ENCODE measurements at regions of chr2 and their contacts with region 1.

Region 1: DNA sequence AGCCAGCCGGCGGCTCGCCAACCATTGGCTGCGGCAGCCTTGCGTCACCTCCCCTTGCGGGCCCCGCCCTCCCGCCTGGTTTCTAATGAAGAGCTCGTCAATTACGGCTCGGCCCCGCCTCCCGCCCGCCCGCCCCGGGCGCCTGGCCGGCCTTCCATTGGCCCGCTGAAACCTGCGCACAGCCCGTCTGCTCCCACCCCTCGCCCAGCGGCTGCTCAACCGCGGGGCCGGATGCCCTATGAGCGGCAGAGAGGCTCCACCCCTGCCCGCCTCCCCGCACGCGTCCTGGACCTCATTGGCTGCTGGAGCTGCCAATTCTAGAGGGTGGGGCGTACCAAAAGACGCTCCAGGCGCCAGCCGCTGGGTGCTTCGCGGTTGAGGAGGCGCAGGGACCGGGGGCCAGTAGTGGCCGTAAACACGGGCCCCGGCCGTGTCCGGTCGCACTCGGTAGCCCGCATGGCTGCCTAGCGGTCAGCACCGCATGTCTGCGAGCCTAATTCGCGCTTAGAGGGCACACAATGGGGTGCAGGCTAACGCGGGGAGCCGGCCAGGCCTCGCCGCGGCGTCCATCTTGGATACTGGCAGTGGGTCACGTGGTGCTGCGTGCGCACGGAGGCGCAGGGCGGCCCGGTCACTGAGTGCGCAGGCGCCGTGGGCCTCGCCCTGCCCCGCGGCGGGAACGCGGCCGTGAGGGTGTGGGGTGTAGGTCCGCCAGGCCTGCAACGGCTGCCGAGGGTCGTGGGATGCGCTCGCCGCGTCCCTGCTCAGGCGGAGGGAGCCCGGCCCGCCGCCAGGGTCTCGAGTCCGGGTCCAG is 454 bp upstream of the HDAC4 start:
- DNase-seq: peak; percentile 98 to 99
- ATAC-seq: peak; percentile 78 to 80
- H3K4me3 ChIP-seq: peak overlapping the region; percentile 61 to 96 (median 78)
- H3K27ac ChIP-seq: peak overlapping the region; percentile 93 to 100 (median 97)
- H3K4me1 ChIP-seq: peaks cover 13 to 39% of the 10 kb centered on the region in 2 donors
- H3K27me3 ChIP-seq: no peaks in the 10 kb centered on the region
- CTCF ChIP-seq: peak in 1 of 5 experiments; percentile 36
- POLR2A ChIP-seq: peak; percentile 98 to 99

Region 2: GRCh38 chr2:239087046-239087710 is 314.1 kb before region 1 on chr2:
- in situ Hi-C with region 1: no loop called
- intact Hi-C with region 1: no loop called
- DNase-seq: no peak
- ATAC-seq: no peak
- H3K4me3 ChIP-seq: no peak overlapping the region
- H3K27ac ChIP-seq: no peak overlapping the region
- H3K4me1 ChIP-seq: no peaks in the 10 kb centered on the region
- H3K27me3 ChIP-seq: no peaks in the 10 kb centered on the region
- CTCF ChIP-seq: no peak
- POLR2A ChIP-seq: no peak

Region 3: GRCh38 chr2:239143858-239144718 is 257.2 kb before region 1 on chr2:
- in situ Hi-C with region 1: no loop called
- intact Hi-C with region 1: loop called (anchors 5 kb)
- DNase-seq: peak in 1 of 2 donors; percentile 49
- ATAC-seq: peak; percentile 46 to 68
- H3K4me3 ChIP-seq: no peak overlapping the region
- H3K27ac ChIP-seq: peak overlapping the region; percentile 17 to 93 (median 58)
- H3K4me1 ChIP-seq: no peaks in the 10 kb centered on the region
- H3K27me3 ChIP-seq: no peaks in the 10 kb centered on the region
- CTCF ChIP-seq: peak; percentile 44 to 81 (median 68)
- POLR2A ChIP-seq: no peak

Region 4: GRCh38 chr2:239267288-239267951 is 133.9 kb before region 1 on chr2:
- in situ Hi-C with region 1: no loop called
- intact Hi-C with region 1: loop called (anchors 5 kb)
- DNase-seq: peak in 1 of 2 donors; percentile 73
- ATAC-seq: peak; percentile 14 to 49
- H3K4me3 ChIP-seq: peak overlapping the region in 3 of 4 donors; percentile 11 to 22 (median 19)
- H3K27ac ChIP-seq: peak overlapping the region; percentile 94 to 99 (median 98)
- H3K4me1 ChIP-seq: peaks cover 89 to 99% of the 10 kb centered on the region in 2 donors
- H3K27me3 ChIP-seq: no peaks in the 10 kb centered on the region
- CTCF ChIP-seq: peak in 3 of 5 experiments; percentile 16 to 50 (median 42)
- POLR2A ChIP-seq: peak; percentile 16 to 39

Region 5: GRCh38 chr2:239308661-239309397 is 92.4 kb before region 1 on chr2:
- in situ Hi-C with region 1: no loop called
- intact Hi-C with region 1: loop called (anchors 5 kb)
- DNase-seq: peak; percentile 73 to 83
- ATAC-seq: peak; percentile 13 to 42
- H3K4me3 ChIP-seq: peak overlapping the region; percentile 63 to 71 (median 69)
- H3K27ac ChIP-seq: peak overlapping the region; percentile 94 to 99 (median 98)
- H3K4me1 ChIP-seq: peaks cover 71 to 72% of the 10 kb centered on the region in 2 donors
- H3K27me3 ChIP-seq: no peaks in the 10 kb centered on the region
- CTCF ChIP-seq: peak in 2 of 5 experiments; percentile 10 to 29
- POLR2A ChIP-seq: peak; percentile 78 to 94

Region 6: GRCh38 chr2:239380831-239381708 is 20.2 kb before region 1 on chr2:
- in situ Hi-C with region 1: no loop called
- intact Hi-C with region 1: no loop called
- DNase-seq: no peak
- ATAC-seq: no peak
- H3K4me3 ChIP-seq: no peak overlapping the region
- H3K27ac ChIP-seq: no peak overlapping the region
- H3K4me1 ChIP-seq: no peaks in the 10 kb centered on the region
- H3K27me3 ChIP-seq: no peaks in the 10 kb centered on the region
- CTCF ChIP-seq: no peak
- POLR2A ChIP-seq: no peak

Region 7: DNA sequence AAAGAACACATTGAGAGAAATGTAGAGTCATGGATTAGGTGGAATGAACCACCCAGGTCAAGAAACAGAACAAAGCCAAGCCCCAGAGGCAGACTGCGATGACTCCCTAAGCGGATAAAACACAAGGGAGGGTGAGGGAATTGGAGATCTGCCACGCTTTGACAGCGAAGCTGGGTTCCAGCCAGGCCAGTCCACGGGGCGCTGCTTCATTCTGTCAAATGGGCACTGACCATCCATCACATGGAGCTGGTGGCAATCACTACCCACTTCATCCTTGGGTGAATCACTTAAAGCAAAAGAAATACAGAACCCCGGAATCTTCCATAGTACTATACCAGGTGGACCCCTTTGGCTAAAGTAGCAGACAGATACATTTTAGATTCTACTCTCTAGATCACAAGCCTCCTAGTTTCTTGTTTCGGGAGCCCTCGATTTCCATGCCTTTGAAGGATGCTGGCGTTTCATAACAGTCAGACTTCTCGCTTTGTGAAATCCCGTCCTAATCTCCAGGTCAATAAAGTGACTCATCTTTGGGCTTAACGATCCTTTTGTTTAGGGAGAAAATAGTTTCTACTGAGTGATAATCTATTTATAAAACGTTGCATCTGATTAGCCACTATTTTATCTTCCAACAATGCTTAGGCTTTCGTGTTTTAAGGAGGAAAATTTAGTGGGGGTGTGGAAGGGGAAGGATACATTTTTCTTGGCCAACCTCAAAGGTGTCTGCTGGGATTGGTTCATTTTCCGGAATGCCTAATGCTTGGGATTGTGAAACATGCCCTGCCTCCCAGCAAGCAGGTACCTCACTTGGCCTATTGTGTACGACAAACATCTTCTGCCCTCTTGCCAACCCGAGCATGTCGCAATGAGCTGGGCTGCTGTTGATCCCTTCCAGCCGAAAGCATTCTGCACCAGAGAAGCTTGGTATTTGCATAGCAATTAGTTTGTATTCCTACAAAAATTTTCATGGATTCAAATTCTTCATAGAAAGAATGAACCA is 43.7 kb after region 1 on chr2:
- in situ Hi-C with region 1: no loop called
- intact Hi-C with region 1: loop called (anchors 2 kb)
- DNase-seq: peak in 1 of 2 donors; percentile 57
- ATAC-seq: peak; percentile 74 to 78
- H3K4me3 ChIP-seq: no peak overlapping the region
- H3K27ac ChIP-seq: peak overlapping the region in 1 of 4 donors; percentile 52
- H3K4me1 ChIP-seq: peaks cover 7 to 13% of the 10 kb centered on the region in 2 donors
- H3K27me3 ChIP-seq: peaks cover 4 to 7% (median 7%) of the 10 kb centered on the region in 3 donors
- CTCF ChIP-seq: no peak
- POLR2A ChIP-seq: no peak

Region 8: GRCh38 chr2:239544143-239544917 is 143.1 kb after region 1 on chr2:
- in situ Hi-C with region 1: no loop called
- intact Hi-C with region 1: loop called (anchors 1 kb)
- DNase-seq: peak in 1 of 2 donors; percentile 4
- ATAC-seq: no peak
- H3K4me3 ChIP-seq: no peak overlapping the region
- H3K27ac ChIP-seq: no peak overlapping the region
- H3K4me1 ChIP-seq: peaks cover 7 to 10% of the 10 kb centered on the region in 2 donors
- H3K27me3 ChIP-seq: no peaks in the 10 kb centered on the region
- CTCF ChIP-seq: no peak
- POLR2A ChIP-seq: no peak

Region 9: GRCh38 chr2:239882331-239882732 is 481.1 kb after region 1 on chr2:
- in situ Hi-C with region 1: loop called in 1 of 4 experiments (anchors 25 kb)
- intact Hi-C with region 1: no loop called
- DNase-seq: peak in 1 of 2 donors; percentile 33
- ATAC-seq: peak; percentile 58 to 79
- H3K4me3 ChIP-seq: no peak overlapping the region
- H3K27ac ChIP-seq: no peak overlapping the region
- H3K4me1 ChIP-seq: peaks cover 0 to 6% of the 10 kb centered on the region in 2 donors
- H3K27me3 ChIP-seq: no peaks in the 10 kb centered on the region
- CTCF ChIP-seq: peak; percentile 45 to 62 (median 59)
- POLR2A ChIP-seq: no peak

Region 10: GRCh38 chr2:240013343-240013742 is 612.1 kb after region 1 on chr2:
- in situ Hi-C with region 1: no loop called
- intact Hi-C with region 1: no loop called
- DNase-seq: no peak
- ATAC-seq: no peak
- H3K4me3 ChIP-seq: no peak overlapping the region
- H3K27ac ChIP-seq: no peak overlapping the region
- H3K4me1 ChIP-seq: no peaks in the 10 kb centered on the region
- H3K27me3 ChIP-seq: no peaks in the 10 kb centered on the region
- CTCF ChIP-seq: no peak
- POLR2A ChIP-seq: no peak